Activated CD4-positive, alpha-beta memory T cell treated with anti-CD3 and anti-CD28 coated beads for 36 hours (primary cell): ENCODE measurements at regions of chr10 and their contacts with region 1.

Region 1: DNA sequence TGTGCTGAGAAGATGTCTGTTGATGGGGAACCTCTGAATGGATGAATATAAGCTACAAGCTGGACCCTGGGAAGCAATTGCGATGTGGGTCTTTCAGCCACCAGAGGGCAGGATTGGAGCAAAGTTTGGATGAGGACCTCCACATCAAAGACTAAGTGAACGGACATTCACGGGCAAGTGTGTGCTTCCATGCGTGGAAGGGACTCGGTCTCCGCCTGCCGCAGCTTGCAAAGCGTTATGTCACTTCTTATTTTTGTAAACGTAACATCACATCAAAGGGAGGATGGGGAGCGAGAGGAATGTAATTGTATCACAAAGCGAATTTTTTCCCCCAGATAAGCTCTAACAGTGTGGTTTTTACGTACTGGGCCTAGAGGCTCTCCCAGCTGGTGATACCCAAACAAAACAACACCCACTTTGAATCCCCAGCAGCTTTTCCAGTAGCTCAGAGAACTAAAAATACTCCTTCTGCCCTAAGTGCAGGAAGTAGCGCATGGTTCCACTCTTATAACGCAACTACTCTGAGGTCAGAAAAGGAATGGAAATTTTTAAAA is 65.0 kb downstream of the VWA2 start:
- DNase-seq: peak; percentile 85
- H3K4me3 Mint-ChIP-seq: peak overlapping the region; percentile 69
- H3K27ac Mint-ChIP-seq: peak overlapping the region; percentile 15
- H3K4me1 Mint-ChIP-seq: peaks cover 9% of the 10 kb centered on the region
- H3K27me3 Mint-ChIP-seq: no peaks in the 10 kb centered on the region

Region 2: GRCh38 chr10:114173921-114174694 is 130.0 kb before region 1 on chr10 and contains the start of gene CCDC186:
- CTCF ChIA-PET with region 1: interaction called, 13 read pairs
- POLR2A ChIA-PET with region 1: no interaction called
- intact Hi-C with region 1: loop called (anchors 1 kb)
- DNase-seq: peak; percentile 99
- H3K4me3 Mint-ChIP-seq: peak within 1 kb of the TSS; percentile 93
- H3K27ac Mint-ChIP-seq: peak within 1 kb of the TSS; percentile 91
- H3K4me1 Mint-ChIP-seq: peaks cover 33% of the 10 kb centered on the region
- H3K27me3 Mint-ChIP-seq: no peaks in the 10 kb centered on the region
- total RNA-seq, gene CCDC186: 12.6 to 13.8 TPM

Region 3: DNA sequence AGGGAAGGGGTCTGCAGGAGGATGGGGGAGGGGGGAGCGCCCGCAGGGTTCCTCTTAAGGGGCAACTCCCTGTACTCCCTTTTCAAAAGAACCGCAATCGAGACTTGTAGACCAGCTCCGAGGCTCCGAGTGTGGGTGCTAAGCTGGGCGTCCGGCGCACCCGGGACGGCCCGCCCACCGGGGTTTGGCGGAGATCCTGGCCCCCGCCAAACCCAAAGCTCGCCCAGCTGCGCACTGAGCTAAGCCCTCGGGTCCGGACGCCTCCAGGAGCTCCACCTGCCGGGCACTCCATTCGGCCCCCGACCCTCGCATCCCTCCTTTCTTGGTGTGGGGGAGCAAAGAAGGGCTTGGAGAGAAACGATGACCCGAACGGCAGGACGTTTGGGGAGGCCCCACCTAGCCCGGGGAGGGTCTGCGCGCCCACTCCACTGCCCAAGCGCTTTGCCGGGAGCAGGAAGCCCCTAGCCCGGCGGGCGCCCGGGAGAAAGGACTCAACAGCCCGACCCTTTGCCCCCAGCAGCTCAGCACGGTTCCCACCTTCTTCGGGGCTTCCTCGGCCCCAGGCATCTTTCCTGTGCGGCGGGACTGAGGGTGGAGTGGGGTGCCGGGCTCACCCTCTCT is 99.6 kb after region 1 on chr10:
- CTCF ChIA-PET with region 1: interaction called, 9 read pairs
- POLR2A ChIA-PET with region 1: no interaction called
- intact Hi-C with region 1: loop called (anchors 5 kb)
- DNase-seq: no peak
- H3K4me3 Mint-ChIP-seq: peak overlapping the region; percentile 7
- H3K27ac Mint-ChIP-seq: no peak overlapping the region
- H3K4me1 Mint-ChIP-seq: peaks cover 12% of the 10 kb centered on the region
- H3K27me3 Mint-ChIP-seq: peaks cover 58% of the 10 kb centered on the region

Region 4: DNA sequence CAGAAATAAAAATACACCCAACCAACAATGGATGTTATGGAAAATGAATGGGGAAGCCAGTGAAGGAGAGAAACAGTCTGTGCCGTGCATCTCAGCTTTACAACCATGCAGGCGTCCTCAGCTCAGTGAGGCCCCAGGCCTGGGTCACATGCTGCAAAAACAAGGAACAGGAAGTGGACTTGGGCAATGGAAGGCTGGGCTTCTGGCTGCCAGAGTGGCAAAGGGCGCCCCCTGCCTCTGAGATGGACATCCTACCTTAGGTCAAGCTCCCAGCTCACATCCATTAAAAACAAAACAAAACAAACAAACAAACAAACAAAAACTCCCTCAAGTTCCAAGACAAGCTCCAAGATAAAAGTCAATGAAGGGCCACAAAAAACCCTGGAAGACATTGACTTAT is 154.9 kb after region 1 on chr10:
- CTCF ChIA-PET with region 1: interaction called, 33 read pairs
- POLR2A ChIA-PET with region 1: no interaction called
- intact Hi-C with region 1: loop called (anchors 1 kb)
- DNase-seq: peak; percentile 57
- H3K4me3 Mint-ChIP-seq: no peak overlapping the region
- H3K27ac Mint-ChIP-seq: no peak overlapping the region
- H3K4me1 Mint-ChIP-seq: peaks cover 4% of the 10 kb centered on the region
- H3K27me3 Mint-ChIP-seq: no peaks in the 10 kb centered on the region

Region 5: DNA sequence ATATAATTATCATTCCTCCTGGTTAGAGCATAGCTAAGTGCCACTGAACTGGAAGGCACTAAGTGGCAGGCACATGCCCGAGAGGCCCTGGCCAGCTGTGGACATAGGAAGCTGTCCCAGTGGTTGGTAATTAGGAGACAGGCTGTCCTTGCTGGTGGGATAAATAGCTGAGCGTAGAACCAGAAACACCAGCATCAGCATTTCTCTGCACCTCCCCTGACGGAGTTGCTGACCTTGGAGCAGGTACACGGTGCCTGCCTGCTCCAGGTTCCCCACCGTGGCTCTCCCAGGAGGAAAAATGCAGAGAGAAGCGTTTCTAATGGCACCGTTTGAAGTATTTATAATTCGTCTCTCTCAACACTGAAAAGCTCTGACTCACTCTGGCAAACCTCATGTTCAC is 359.5 kb after region 1 on chr10:
- CTCF ChIA-PET with region 1: no interaction called
- POLR2A ChIA-PET with region 1: no interaction called
- intact Hi-C with region 1: no loop called
- DNase-seq: no peak
- H3K4me3 Mint-ChIP-seq: no peak overlapping the region
- H3K27ac Mint-ChIP-seq: no peak overlapping the region
- H3K4me1 Mint-ChIP-seq: no peaks in the 10 kb centered on the region
- H3K27me3 Mint-ChIP-seq: peaks cover 2% of the 10 kb centered on the region

Region 6: DNA sequence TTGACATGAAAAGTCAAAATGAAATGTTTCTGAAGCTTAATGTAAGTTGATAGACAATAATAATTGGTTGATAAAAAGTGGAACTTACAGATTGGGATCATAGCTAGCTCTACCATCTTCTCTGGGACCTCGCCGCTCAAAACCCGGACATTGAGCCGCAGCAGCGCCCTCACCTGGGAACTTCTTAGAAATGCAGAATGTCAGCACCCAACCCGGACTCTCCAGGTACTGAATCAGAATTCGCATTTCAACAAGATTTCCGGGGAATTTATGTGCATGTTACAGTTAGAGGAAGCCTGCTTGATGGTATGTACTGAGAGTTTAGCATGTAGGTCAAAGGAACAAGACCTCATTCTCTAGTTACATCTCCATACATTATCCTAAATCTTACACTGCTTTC is 390.7 kb after region 1 on chr10:
- CTCF ChIA-PET with region 1: interaction called, 10 read pairs
- POLR2A ChIA-PET with region 1: no interaction called
- intact Hi-C with region 1: no loop called
- DNase-seq: peak; percentile 63
- H3K4me3 Mint-ChIP-seq: no peak overlapping the region
- H3K27ac Mint-ChIP-seq: no peak overlapping the region
- H3K4me1 Mint-ChIP-seq: peaks cover 5% of the 10 kb centered on the region
- H3K27me3 Mint-ChIP-seq: peaks cover 4% of the 10 kb centered on the region

Region 7: DNA sequence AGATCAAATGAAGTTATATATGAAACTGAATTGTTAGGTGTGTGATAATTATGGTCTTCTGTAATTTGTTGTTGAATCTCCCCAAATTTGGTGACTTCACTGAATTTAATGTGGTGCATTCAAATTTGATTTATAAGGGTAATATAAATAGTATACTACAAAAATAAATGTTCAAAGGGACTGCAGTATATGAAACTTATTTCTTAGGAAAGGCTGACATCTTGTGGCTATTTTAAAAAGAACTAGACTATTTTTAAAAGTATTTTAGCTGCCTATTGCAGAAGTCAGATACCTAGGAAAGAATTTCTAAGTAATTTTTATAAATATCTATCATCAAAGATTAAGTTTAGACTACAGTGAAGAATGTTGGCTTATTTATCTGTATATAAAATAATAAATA is 825.7 kb after region 1 on chr10:
- CTCF ChIA-PET with region 1: interaction called, 18 read pairs
- POLR2A ChIA-PET with region 1: no interaction called
- intact Hi-C with region 1: loop called (anchors 5 kb)
- DNase-seq: no peak
- H3K4me3 Mint-ChIP-seq: no peak overlapping the region
- H3K27ac Mint-ChIP-seq: no peak overlapping the region
- H3K4me1 Mint-ChIP-seq: no peaks in the 10 kb centered on the region
- H3K27me3 Mint-ChIP-seq: peaks cover 9% of the 10 kb centered on the region